ENCODE measurements at regions of chr12 and their contacts with region 1.

Region 1: GRCh38 chr12:108838194-108839017 is 19.0 kb downstream of the SSH1 start:
- DNase-seq: peak; percentile 94
- H3K4me3 Mint-ChIP-seq: peak overlapping the region; percentile 66
- H3K27ac Mint-ChIP-seq: peak overlapping the region; percentile 100
- H3K4me1 Mint-ChIP-seq: peaks cover 65% of the 10 kb centered on the region
- H3K27me3 Mint-ChIP-seq: no peaks in the 10 kb centered on the region
- CTCF ChIP-seq: no peak

Region 2: GRCh38 chr12:108856428-108857157 is 18.2 kb after region 1 on chr12:
- CTCF ChIA-PET with region 1: interaction called, 8 read pairs
- intact Hi-C with region 1: loop called (anchors 2 kb)
- DNase-seq: peak; percentile 58
- H3K4me3 Mint-ChIP-seq: peak overlapping the region; percentile 81
- H3K27ac Mint-ChIP-seq: peak overlapping the region; percentile 33
- H3K4me1 Mint-ChIP-seq: peaks cover 41% of the 10 kb centered on the region
- H3K27me3 Mint-ChIP-seq: no peaks in the 10 kb centered on the region
- CTCF ChIP-seq: no peak

Region 3: GRCh38 chr12:108875682-108876361 is 37.4 kb after region 1 on chr12:
- CTCF ChIA-PET with region 1: no interaction called
- intact Hi-C with region 1: no loop called
- DNase-seq: no peak
- H3K4me3 Mint-ChIP-seq: no peak overlapping the region
- H3K27ac Mint-ChIP-seq: no peak overlapping the region
- H3K4me1 Mint-ChIP-seq: peaks cover 8% of the 10 kb centered on the region
- H3K27me3 Mint-ChIP-seq: no peaks in the 10 kb centered on the region
- CTCF ChIP-seq: no peak

Region 4: GRCh38 chr12:109093022-109093918 is 254.9 kb after region 1 on chr12 and contains the start of gene ALKBH2:
- CTCF ChIA-PET with region 1: no interaction called
- intact Hi-C with region 1: loop called (anchors 10 kb)
- DNase-seq: peak; percentile 96
- H3K4me3 Mint-ChIP-seq: peak within 1 kb of the TSS; percentile 68
- H3K27ac Mint-ChIP-seq: peak within 1 kb of the TSS; percentile 53
- H3K4me1 Mint-ChIP-seq: peaks cover 13% of the 10 kb centered on the region
- H3K27me3 Mint-ChIP-seq: no peaks in the 10 kb centered on the region
- CTCF ChIP-seq: peak; percentile 95
- total RNA-seq, gene ALKBH2: 43.1 and 43.2 TPM in 2 replicates